ENCODE measurements at regions of chr3 and their contacts with region 1.

Region 1: DNA sequence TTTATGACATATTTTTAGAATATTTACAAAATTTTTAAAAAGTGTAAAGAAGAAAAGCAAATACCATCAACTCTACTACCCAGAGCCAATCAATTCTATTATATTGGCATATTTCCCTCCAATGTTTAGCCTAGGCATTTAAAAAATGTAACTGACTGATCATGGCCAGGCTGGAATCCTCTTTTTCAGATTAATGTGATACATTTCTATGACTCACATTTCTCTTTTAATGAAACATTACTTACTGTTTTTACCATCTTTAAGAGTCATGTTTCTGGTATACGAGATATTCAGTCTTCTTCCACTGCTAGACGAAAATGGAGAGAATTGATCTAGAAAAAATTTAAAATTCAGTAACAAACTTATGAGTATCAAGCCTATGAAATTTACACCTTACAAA is 53.4 kb upstream of the DCUN1D1 start:
- DNase-seq: no peak
- ATAC-seq: no peak
- H3K4me3 ChIP-seq: no peak overlapping the region
- H3K27ac ChIP-seq: no peak overlapping the region
- H3K4me1 ChIP-seq: no peaks in the 10 kb centered on the region
- H3K27me3 ChIP-seq: no peaks in the 10 kb centered on the region
- CTCF ChIP-seq: no peak

Region 2: DNA sequence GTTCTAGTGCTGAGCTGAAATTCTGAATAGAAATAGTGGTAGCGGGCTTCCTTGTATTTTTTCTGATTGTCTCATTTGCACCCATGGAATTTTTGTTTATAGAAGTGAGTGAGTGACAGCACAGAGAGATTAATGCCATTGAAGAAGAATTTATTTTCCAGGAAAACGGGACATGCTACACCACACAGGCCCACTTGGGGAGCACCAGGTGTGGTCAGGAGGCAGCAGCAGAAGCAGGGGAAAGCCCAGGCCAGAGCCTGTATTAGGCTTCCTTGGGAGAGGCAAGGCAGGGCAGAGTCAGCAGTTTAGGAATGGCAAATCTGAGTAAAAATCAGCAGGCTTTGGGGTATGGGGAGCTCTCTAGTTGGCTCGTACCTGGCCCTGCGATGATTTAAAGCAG is 328.8 kb before region 1 on chr3:
- CTCF ChIA-PET with region 1: no interaction called
- POLR2A ChIA-PET with region 1: no interaction called
- intact Hi-C with region 1: no loop called
- DNase-seq: no peak
- ATAC-seq: peak; percentile 64
- H3K4me3 ChIP-seq: no peak overlapping the region
- H3K27ac ChIP-seq: no peak overlapping the region
- H3K4me1 ChIP-seq: no peaks in the 10 kb centered on the region
- H3K27me3 ChIP-seq: no peaks in the 10 kb centered on the region
- CTCF ChIP-seq: no peak; the same call in 1 of the 2 replicates

Region 3: DNA sequence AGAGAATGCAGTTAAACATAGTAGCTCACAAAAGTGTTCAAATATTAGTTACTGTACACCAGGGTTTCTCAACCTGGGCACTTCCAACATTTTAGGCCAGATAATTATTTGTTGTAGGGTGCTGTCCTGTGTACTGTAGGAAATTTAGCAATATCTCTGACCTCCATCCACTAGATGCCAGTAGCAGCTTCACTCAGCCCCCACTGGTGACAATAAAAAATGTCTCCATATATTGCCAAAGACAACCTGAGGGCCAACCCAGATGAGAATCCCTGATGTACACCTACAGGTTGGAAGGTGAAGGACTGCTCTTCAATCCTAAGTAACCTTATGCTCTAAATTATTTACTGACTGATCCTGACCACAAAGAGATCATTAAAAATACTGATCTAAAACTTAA is 85.9 kb before region 1 on chr3:
- CTCF ChIA-PET with region 1: interaction called, 13 read pairs
- POLR2A ChIA-PET with region 1: no interaction called
- intact Hi-C with region 1: no loop called
- DNase-seq: peak; percentile 62
- ATAC-seq: peak; percentile 94
- H3K4me3 ChIP-seq: no peak overlapping the region
- H3K27ac ChIP-seq: no peak overlapping the region
- H3K4me1 ChIP-seq: no peaks in the 10 kb centered on the region
- H3K27me3 ChIP-seq: no peaks in the 10 kb centered on the region
- CTCF ChIP-seq: peak; percentile 59

Region 4: DNA sequence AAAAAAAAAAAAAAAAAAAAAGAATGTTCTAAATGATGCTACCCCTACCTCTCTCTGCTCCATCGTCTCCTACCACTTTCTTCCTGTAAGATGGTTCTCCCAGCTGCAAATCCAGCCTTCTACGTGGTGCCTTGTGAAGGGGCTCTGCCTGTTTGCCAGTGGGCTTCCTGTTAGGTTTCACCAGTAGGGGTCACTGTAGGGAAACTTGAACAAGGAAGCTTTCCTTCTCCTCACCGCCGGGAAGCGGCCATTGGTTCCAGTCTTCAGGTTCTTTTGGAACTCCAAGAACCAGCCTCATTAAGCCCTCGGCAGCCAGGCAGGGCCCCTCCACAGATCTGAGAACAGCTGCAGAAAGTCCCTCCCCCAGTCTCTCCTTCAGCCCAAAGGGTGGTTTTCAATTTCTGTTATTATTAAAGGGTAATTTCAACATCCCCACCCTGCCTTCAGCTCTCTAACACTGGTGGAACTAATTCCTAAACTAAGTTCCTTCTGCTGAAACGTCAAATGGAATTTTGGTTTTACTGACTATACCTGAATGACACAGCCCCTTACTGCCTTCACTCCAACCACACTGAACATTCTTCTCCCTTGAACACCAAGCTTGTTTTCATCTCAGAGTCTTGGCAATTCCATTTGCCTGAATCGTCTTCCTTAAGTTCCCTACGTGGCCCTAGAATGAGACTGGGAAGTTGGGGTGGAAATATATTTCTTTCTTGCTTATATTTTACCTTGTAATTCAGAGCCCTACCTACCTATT is 52.1 kb after region 1 on chr3:
- CTCF ChIA-PET with region 1: no interaction called
- POLR2A ChIA-PET with region 1: interaction called, 21 read pairs
- intact Hi-C with region 1: no loop called
- DNase-seq: peak; percentile 39
- ATAC-seq: no peak
- H3K4me3 ChIP-seq: no peak overlapping the region
- H3K27ac ChIP-seq: no peak overlapping the region
- H3K4me1 ChIP-seq: peaks cover 3% of the 10 kb centered on the region; the same call in 1 of the 2 replicates
- H3K27me3 ChIP-seq: no peaks in the 10 kb centered on the region
- CTCF ChIP-seq: peak; percentile 67